ENCODE measurements at regions of chr12 and their contacts with region 1.

Region 1: GRCh38 chr12:81128930-81129554 is 51.2 kb downstream of the ACSS3 start:
- DNase-seq: peak; percentile 60
- ATAC-seq: peak; percentile 73
- H3K4me3 ChIP-seq: no peak overlapping the region
- H3K27ac ChIP-seq: no peak overlapping the region
- H3K4me1 ChIP-seq: no peaks in the 10 kb centered on the region
- H3K27me3 ChIP-seq: no peaks in the 10 kb centered on the region
- CTCF ChIP-seq: peak; percentile 83

Region 2: GRCh38 chr12:80946594-80946993 is 182.4 kb before region 1 on chr12:
- CTCF ChIA-PET with region 1: no interaction called
- POLR2A ChIA-PET with region 1: no interaction called
- intact Hi-C with region 1: loop called (anchors 10 kb)
- DNase-seq: peak; percentile 16
- ATAC-seq: peak; percentile 64
- H3K4me3 ChIP-seq: no peak overlapping the region
- H3K27ac ChIP-seq: no peak overlapping the region
- H3K4me1 ChIP-seq: no peaks in the 10 kb centered on the region
- H3K27me3 ChIP-seq: no peaks in the 10 kb centered on the region
- CTCF ChIP-seq: peak; percentile 41

Region 3: DNA sequence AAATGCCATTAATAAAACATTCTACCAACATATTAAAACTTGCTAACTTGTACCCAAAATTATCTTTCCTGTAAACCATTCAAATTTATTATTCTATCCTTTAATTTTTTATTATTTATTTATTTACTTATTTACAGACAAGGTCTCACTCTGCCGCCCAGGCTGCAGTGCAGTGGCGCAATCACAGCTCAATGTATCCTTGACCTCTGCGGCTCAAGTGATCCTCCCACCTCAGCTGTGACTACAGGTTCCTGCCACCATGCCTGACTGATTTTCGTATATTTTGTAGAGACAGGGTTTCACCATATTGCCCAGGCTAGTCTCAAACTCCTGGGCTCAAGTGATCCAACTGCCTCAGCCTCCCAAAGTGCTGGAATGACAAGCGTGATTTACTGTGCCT is 170.9 kb before region 1 on chr12:
- CTCF ChIA-PET with region 1: no interaction called
- POLR2A ChIA-PET with region 1: no interaction called
- intact Hi-C with region 1: no loop called
- DNase-seq: no peak
- ATAC-seq: no peak
- H3K4me3 ChIP-seq: no peak overlapping the region
- H3K27ac ChIP-seq: no peak overlapping the region
- H3K4me1 ChIP-seq: no peaks in the 10 kb centered on the region
- H3K27me3 ChIP-seq: no peaks in the 10 kb centered on the region
- CTCF ChIP-seq: no peak